ENCODE measurements at regions of chr9 and their contacts with region 1.

Region 1: DNA sequence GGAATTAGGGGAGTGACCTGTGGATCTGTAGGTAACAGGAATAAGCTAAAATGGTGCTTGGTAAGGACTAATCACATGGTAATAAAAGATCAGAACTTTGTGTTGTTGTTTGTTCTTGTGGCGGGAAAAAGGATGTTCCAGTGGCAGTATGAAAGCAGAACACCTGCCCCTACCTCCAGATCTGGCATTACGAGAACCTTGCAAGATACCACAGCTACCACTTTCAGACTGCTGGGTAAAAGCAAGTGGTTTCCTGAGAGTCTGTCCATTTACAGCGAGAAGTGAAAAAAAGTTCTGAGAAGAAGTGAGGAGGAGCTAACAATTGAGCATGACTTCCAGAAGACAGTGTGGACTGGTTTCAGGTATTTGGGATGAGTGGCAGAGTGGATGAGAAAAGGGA is 252.5 kb downstream of the TLE4 start:
- DNase-seq: peak; percentile 18
- H3K4me3 ChIP-seq: no peak overlapping the region
- H3K27ac ChIP-seq: peak overlapping the region in 1 of 4 donors; percentile 25
- H3K4me1 ChIP-seq: no peaks in the 10 kb centered on the region
- H3K27me3 ChIP-seq: no peaks in the 10 kb centered on the region
- CTCF ChIP-seq: no peak
- EP300 ChIP-seq: no peak
- POLR2A ChIP-seq: no peak

Region 2: GRCh38 chr9:79883073-79883645 is 58.9 kb after region 1 on chr9:
- in situ Hi-C with region 1: loop called in 1 of 4 experiments (anchors 10 kb)
- intact Hi-C with region 1: no loop called
- DNase-seq: peak; percentile 26
- H3K4me3 ChIP-seq: no peak overlapping the region
- H3K27ac ChIP-seq: no peak overlapping the region
- H3K4me1 ChIP-seq: no peaks in the 10 kb centered on the region
- H3K27me3 ChIP-seq: no peaks in the 10 kb centered on the region
- CTCF ChIP-seq: no peak
- EP300 ChIP-seq: no peak
- POLR2A ChIP-seq: no peak

Measured in transverse colon (tissue), 4 donors.